CD8-positive, alpha-beta T cell (primary cell): ENCODE measurements at regions of chr3 and their contacts with region 1.

Region 1: GRCh38 chr3:55686426-55687254 is 199.5 kb upstream of the WNT5A start:
- DNase-seq: no peak
- ATAC-seq: no peak
- H3K4me3 ChIP-seq: no peak overlapping the region
- H3K4me3 Mint-ChIP-seq: no peak overlapping the region
- H3K27ac ChIP-seq: no peak overlapping the region
- H3K27ac Mint-ChIP-seq: no peak overlapping the region
- H3K4me1 ChIP-seq: no peaks in the 10 kb centered on the region
- H3K4me1 Mint-ChIP-seq: no peaks in the 10 kb centered on the region
- H3K27me3 ChIP-seq: no peaks in the 10 kb centered on the region
- H3K27me3 Mint-ChIP-seq: no peaks in the 10 kb centered on the region
- CTCF ChIP-seq: no peak

Region 2: DNA sequence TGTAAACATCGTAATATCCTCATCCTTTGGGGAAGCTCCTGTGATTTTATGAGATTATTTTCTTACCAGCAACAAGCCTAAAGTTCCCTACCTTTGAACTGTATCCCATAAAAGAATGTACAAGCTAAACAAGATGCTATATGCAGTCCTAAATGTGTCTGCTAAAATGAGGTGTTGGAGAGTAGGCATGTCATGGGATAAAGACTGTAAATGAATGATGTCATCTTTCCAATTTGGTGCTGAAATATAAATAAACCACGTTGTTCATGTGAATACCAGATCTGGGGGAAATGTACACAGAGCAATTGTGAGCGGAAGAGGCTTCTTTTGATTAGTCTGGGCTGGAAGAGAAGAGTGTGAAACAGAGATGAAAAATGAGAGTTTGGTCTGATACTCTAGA is 15.4 kb after region 1 on chr3:
- CTCF ChIA-PET with region 1: no interaction called
- POLR2A ChIA-PET with region 1: no interaction called
- intact Hi-C with region 1: no loop called
- DNase-seq: no peak
- ATAC-seq: no peak
- H3K4me3 ChIP-seq: no peak overlapping the region
- H3K4me3 Mint-ChIP-seq: no peak overlapping the region
- H3K27ac ChIP-seq: no peak overlapping the region
- H3K27ac Mint-ChIP-seq: no peak overlapping the region
- H3K4me1 ChIP-seq: no peaks in the 10 kb centered on the region
- H3K4me1 Mint-ChIP-seq: no peaks in the 10 kb centered on the region
- H3K27me3 ChIP-seq: no peaks in the 10 kb centered on the region
- H3K27me3 Mint-ChIP-seq: no peaks in the 10 kb centered on the region
- CTCF ChIP-seq: no peak

Region 3: GRCh38 chr3:55718521-55718921 is 31.9 kb after region 1 on chr3:
- CTCF ChIA-PET with region 1: no interaction called
- POLR2A ChIA-PET with region 1: no interaction called
- intact Hi-C with region 1: loop called in 1 of 2 experiments (anchors 1 kb)
- DNase-seq: no peak
- ATAC-seq: no peak
- H3K4me3 ChIP-seq: no peak overlapping the region
- H3K4me3 Mint-ChIP-seq: no peak overlapping the region
- H3K27ac ChIP-seq: no peak overlapping the region
- H3K27ac Mint-ChIP-seq: no peak overlapping the region
- H3K4me1 ChIP-seq: no peaks in the 10 kb centered on the region
- H3K4me1 Mint-ChIP-seq: no peaks in the 10 kb centered on the region
- H3K27me3 ChIP-seq: no peaks in the 10 kb centered on the region
- H3K27me3 Mint-ChIP-seq: peaks cover 6% of the 10 kb centered on the region
- CTCF ChIP-seq: no peak